ENCODE measurements at regions of chr10 and their contacts with region 1.

Region 1: GRCh38 chr10:71314028-71314693 is 4.9 kb upstream of the SLC29A3 start:
- DNase-seq: no peak
- H3K4me3 ChIP-seq: peak overlapping the region; percentile 10
- H3K27ac ChIP-seq: no peak overlapping the region
- H3K4me1 ChIP-seq: no peaks in the 10 kb centered on the region
- H3K27me3 ChIP-seq: no peaks in the 10 kb centered on the region
- CTCF ChIP-seq: peak; percentile 87

Region 2: GRCh38 chr10:70967596-70968587 is 346.3 kb before region 1 on chr10:
- intact Hi-C with region 1: no loop called
- DNase-seq: no peak
- H3K4me3 ChIP-seq: no peak overlapping the region
- H3K27ac ChIP-seq: no peak overlapping the region
- H3K4me1 ChIP-seq: no peaks in the 10 kb centered on the region
- H3K27me3 ChIP-seq: no peaks in the 10 kb centered on the region
- CTCF ChIP-seq: no peak

Region 3: GRCh38 chr10:71390461-71390835 is 76.3 kb after region 1 on chr10:
- intact Hi-C with region 1: no loop called
- DNase-seq: no peak
- H3K4me3 ChIP-seq: no peak overlapping the region
- H3K27ac ChIP-seq: no peak overlapping the region
- H3K4me1 ChIP-seq: no peaks in the 10 kb centered on the region
- H3K27me3 ChIP-seq: no peaks in the 10 kb centered on the region
- CTCF ChIP-seq: no peak

Region 4: GRCh38 chr10:71476228-71477011 is 162.3 kb after region 1 on chr10:
- intact Hi-C with region 1: no loop called
- DNase-seq: no peak
- H3K4me3 ChIP-seq: no peak overlapping the region
- H3K27ac ChIP-seq: no peak overlapping the region
- H3K4me1 ChIP-seq: no peaks in the 10 kb centered on the region
- H3K27me3 ChIP-seq: no peaks in the 10 kb centered on the region
- CTCF ChIP-seq: no peak

Region 5: GRCh38 chr10:71569775-71570588 is 255.8 kb after region 1 on chr10:
- intact Hi-C with region 1: loop called (anchors 2 kb)
- DNase-seq: peak; percentile 87
- H3K4me3 ChIP-seq: no peak overlapping the region
- H3K27ac ChIP-seq: no peak overlapping the region
- H3K4me1 ChIP-seq: no peaks in the 10 kb centered on the region
- H3K27me3 ChIP-seq: no peaks in the 10 kb centered on the region
- CTCF ChIP-seq: peak; percentile 74

Region 6: GRCh38 chr10:71708301-71708703 is 394.1 kb after region 1 on chr10:
- intact Hi-C with region 1: loop called (anchors 5 kb)
- DNase-seq: peak; percentile 62
- H3K4me3 ChIP-seq: no peak overlapping the region
- H3K27ac ChIP-seq: no peak overlapping the region
- H3K4me1 ChIP-seq: no peaks in the 10 kb centered on the region
- H3K27me3 ChIP-seq: no peaks in the 10 kb centered on the region
- CTCF ChIP-seq: peak; percentile 88

Region 7: DNA sequence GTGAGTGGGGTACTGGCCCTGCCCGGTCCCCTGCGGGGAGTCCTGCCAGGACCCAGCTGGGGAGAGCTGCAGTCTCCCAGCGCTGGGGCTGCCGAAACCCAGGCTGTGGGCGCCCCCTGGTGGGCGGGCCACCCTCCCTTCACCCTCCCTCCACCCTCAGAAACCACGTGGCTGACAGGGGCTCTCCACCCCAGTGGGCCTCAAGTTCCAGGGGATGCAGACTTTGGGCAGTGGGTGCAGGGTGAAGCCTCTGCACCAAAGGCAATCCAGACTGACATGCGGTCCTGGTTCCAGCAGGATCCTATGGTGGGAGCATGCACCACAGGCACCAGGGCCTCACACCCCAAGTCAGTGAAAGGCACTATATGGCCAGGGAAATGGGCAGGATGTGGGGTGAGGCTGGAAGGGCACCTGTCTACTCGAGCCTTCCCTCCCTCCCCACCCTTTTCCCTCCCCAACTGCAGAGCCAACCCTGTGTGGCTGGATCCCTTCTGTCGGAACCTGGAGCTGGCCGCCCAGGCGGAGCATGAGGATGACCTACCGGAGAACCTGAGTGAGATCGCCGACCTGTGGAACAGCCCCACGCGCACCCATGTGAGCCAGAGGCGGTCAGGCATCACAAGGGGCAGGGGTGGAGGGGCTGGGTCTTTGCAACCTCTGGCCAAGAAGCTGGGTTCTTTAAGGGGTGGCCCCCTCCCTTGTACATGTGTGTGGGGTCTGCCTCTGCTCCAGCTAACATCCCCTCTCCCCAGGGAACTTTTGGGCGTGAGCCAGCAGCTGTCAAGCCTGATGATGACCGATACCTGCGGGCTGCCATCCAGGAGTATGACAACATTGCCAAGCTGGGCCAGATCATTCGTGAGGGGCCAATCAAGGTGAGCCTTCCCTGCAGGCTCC is 498.1 kb after region 1 on chr10:
- intact Hi-C with region 1: loop called (anchors 5 kb)
- DNase-seq: peak; percentile 76
- H3K4me3 ChIP-seq: no peak overlapping the region
- H3K27ac ChIP-seq: no peak overlapping the region
- H3K4me1 ChIP-seq: no peaks in the 10 kb centered on the region
- H3K27me3 ChIP-seq: no peaks in the 10 kb centered on the region
- CTCF ChIP-seq: peak; percentile 95

Region 8: DNA sequence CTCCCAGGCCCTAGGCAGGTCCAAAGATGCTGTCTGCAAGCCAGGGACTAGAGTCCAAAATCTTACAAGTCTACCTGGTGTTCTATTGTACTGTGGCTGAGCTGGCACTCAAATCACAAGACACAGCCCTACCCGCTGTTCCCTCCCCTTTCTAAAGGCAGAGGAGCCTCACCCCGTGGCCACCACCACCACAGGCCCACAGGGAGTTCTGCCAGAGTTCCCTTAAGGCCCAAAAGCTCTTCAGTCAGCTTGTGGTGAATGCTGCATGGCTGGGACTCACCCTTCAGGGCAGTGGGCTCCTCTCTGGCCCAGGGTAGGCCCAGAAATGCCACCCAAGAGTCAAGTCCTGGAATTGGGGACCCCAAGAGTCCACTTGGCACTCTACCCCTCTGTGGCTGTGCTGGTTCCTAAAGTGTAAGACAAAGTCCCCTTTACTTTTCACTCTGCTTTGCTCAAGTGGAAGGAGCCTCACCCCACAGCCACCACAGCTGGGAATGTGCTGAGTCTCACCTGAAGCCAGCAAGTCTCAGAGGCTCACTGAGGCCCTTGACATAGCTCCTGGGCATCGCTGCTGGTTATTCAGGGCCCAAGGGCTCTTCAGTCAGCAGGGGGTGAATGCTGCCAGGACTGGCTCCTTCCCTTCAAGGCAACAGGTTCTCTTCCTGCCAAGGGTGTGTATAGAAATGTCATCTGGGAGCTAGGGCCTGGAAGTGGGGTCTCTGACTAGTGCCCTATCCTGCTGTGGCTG is 585.7 kb after region 1 on chr10:
- intact Hi-C with region 1: loop called (anchors 5 kb)
- DNase-seq: no peak
- H3K4me3 ChIP-seq: no peak overlapping the region
- H3K27ac ChIP-seq: no peak overlapping the region
- H3K4me1 ChIP-seq: no peaks in the 10 kb centered on the region
- H3K27me3 ChIP-seq: no peaks in the 10 kb centered on the region
- CTCF ChIP-seq: no peak